WTC11 (cell line): ENCODE measurements at regions of chr5 and their contacts with region 1.

Region 1: DNA sequence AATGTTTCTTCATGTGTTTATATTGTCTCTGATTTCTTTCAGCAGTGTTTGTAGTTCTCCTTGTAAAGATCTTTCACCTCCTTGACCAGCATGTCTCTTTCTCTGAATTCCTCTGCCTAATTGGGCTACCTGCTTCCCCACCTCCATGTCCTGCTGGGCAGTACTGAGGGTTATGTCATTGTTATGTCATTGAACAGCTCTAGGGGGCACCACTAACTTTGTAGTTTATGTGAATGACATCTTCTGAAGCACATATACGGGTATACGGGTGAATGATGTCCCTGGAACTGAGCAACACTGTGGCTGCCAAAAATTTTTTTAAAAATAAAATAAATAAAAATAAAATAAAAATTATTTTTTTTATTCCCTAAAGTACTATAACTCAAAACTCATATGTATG is 16.9 kb upstream of the SNCAIP start:
- DNase-seq: peak; percentile 36
- ATAC-seq: peak; percentile 89
- H3K4me3 Mint-ChIP-seq: no peak overlapping the region
- H3K27ac Mint-ChIP-seq: no peak overlapping the region
- H3K4me1 Mint-ChIP-seq: peaks cover 35% of the 10 kb centered on the region
- H3K27me3 Mint-ChIP-seq: no peaks in the 10 kb centered on the region
- CTCF ChIP-seq: 0 out of 2 replicates have a peak, but pooled peaks have one; percentile 35

Region 2: GRCh38 chr5:122415030-122415800 is 120.1 kb after region 1 on chr5:
- CTCF ChIA-PET with region 1: interaction called, 14 read pairs
- POLR2A ChIA-PET with region 1: no interaction called
- DNase-seq: peak; percentile 71
- ATAC-seq: peak; percentile 99
- H3K4me3 Mint-ChIP-seq: no peak overlapping the region
- H3K27ac Mint-ChIP-seq: no peak overlapping the region
- H3K4me1 Mint-ChIP-seq: peaks cover 30% of the 10 kb centered on the region
- H3K27me3 Mint-ChIP-seq: no peaks in the 10 kb centered on the region
- CTCF ChIP-seq: peak; percentile 34; the same call in 1 of the 2 replicates